Natural killer cell (primary cell): ENCODE measurements at regions of chr10 and their contacts with region 1.

Region 1: DNA sequence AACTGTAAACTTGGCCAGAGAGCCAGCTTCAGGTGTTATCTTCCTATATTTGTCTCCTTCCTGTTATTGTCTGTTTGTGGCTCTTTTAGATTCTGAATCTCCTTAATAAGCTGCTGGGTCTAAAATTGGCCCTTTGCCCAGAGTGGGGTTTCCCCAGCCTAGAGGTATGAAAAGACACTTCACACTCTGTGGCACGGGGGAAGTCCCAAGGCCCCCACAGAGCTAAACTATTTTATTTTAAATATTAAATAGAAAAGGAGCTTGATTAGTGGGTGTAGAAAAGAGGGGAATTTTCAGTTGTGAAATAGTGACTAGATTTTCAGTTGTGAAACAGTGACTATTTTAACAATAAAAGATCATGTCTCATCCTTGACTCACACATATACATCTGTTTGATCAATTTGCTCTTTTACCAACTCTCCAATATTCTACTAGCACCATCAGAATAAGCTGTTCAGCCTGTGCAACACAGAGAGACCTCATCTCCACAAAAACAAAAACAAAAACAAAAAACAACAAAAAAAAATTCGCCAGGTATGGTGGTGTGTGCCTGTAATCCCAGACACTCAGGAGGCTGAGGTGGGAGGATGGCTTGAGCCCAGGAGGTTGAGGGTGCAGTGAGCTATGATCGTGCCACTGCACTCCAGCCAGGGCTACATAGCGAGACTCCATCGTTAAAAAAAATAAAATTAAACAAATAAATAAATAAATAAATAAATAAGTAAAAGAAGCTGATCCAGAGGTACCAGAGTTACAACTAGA is 24.9 kb upstream of the ADO start:
- DNase-seq: peak; percentile 76 to 97
- ATAC-seq: peak; percentile 92 to 98 (median 97)
- H3K4me3 ChIP-seq: no peak overlapping the region
- H3K4me3 Mint-ChIP-seq: peak overlapping the region; percentile 45
- H3K27ac ChIP-seq: no peak overlapping the region
- H3K27ac Mint-ChIP-seq: peak overlapping the region; percentile 43 to 57
- H3K4me1 ChIP-seq: peaks cover 14% of the 10 kb centered on the region
- H3K4me1 Mint-ChIP-seq: peaks cover 22% of the 10 kb centered on the region in 2 donors
- H3K27me3 ChIP-seq: no peaks in the 10 kb centered on the region
- H3K27me3 Mint-ChIP-seq: no peaks in the 10 kb centered on the region
- CTCF ChIP-seq: no peak

Region 2: DNA sequence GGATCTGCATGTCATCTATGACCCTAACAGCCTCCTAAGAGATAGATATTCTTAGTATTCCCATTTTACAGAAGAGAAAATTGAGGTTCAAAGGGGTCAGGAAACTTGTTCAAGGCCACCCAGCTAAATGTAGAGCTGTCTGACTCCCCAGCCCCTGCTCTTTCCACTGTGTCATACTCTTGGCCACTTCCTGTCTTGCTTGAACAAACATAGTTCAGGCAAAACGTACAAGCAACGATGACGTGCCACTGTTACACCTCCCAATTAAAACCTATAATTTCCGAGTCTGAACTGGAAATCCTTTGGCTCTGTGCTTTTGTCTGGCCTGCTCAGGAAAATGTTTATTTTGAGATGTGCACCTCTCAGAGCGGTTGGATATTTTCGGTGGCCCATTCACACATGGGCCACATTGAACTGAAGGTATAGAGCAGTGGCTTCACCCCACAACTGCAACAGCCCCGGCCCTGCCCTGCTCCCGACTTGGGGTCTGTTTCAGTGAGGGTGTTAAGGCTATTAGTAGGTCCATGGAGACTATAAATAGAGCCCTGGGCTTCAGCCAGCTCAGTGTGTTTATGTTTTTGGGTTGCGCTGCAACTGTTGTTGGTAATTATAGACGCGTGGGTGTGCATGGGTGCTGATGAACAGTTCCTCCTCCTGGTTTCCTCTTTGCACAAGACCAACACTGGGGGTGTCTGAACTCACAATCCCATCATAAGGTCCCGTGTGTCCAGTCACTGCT is 147.4 kb before region 1 on chr10:
- intact Hi-C with region 1: loop called (anchors 1 kb)
- DNase-seq: peak; percentile 65 to 80
- ATAC-seq: peak; percentile 77 to 91 (median 83)
- H3K4me3 ChIP-seq: no peak overlapping the region
- H3K4me3 Mint-ChIP-seq: peak overlapping the region; percentile 63
- H3K27ac ChIP-seq: peak overlapping the region; percentile 85
- H3K27ac Mint-ChIP-seq: peak overlapping the region in 1 of 2 donors; percentile 99
- H3K4me1 ChIP-seq: peaks cover 44% of the 10 kb centered on the region
- H3K4me1 Mint-ChIP-seq: peaks cover 19 to 23% of the 10 kb centered on the region in 2 donors
- H3K27me3 ChIP-seq: no peaks in the 10 kb centered on the region
- H3K27me3 Mint-ChIP-seq: no peaks in the 10 kb centered on the region
- CTCF ChIP-seq: no peak

Region 3: GRCh38 chr10:62732841-62733653 is 46.6 kb before region 1 on chr10:
- intact Hi-C with region 1: loop called (anchors 2 kb)
- DNase-seq: peak; percentile 33 to 88
- ATAC-seq: peak; percentile 73 to 80 (median 79)
- H3K4me3 ChIP-seq: no peak overlapping the region
- H3K4me3 Mint-ChIP-seq: peak overlapping the region; percentile 28
- H3K27ac ChIP-seq: peak overlapping the region; percentile 50
- H3K27ac Mint-ChIP-seq: peak overlapping the region in 1 of 2 donors; percentile 78
- H3K4me1 ChIP-seq: peaks cover 33% of the 10 kb centered on the region
- H3K4me1 Mint-ChIP-seq: peaks cover 14% of the 10 kb centered on the region in 2 donors
- H3K27me3 ChIP-seq: no peaks in the 10 kb centered on the region
- H3K27me3 Mint-ChIP-seq: no peaks in the 10 kb centered on the region
- CTCF ChIP-seq: no peak

Region 4: DNA sequence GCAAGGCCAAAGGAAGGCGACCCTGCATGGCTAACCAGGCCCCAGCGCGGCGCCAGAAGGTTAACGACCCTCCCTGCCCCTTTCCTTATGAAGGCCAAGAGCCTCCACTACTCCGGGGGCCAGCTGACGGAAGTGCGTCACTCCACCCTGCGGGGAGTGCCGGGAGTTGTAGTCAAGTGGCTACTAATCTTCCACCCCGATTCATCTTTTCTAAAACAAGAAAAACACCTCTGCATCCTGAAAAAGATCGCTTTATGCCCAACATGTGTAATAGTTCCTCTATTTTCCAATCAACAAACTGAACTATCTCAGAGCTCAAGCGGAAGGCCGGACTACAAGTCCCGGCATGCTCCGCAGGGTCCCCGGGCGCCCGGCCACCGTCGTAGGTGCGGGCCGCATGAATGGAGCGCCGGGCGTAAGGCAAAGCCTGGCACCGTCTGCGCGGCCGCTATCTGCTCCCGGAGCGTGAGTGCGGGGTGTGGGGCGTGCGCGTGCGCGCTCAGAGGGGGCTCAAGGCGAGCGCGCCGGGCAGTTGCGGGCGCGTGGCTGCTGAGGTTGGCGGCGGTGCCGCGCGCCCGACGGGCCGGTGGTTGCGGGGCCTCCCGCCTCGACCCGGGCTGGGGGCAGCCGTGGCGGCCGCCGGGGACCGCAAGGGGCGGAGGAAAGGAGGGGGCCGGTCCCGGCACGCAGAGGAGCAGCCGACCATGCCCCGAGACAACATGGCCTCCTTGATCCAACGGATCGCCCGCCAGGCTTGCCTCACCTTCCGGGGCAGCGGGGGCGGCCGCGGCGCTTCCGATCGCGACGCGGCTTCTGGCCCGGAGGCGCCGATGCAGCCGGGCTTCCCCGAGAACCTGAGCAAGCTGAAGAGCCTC is 24.9 kb after region 1 on chr10 and contains the start of gene ADO:
- intact Hi-C with region 1: loop called (anchors 1 kb)
- DNase-seq: peak; percentile 76 to 89
- ATAC-seq: peak; percentile 85 to 93 (median 87)
- H3K4me3 ChIP-seq: peak within 1 kb of the TSS; percentile 69
- H3K4me3 Mint-ChIP-seq: peak within 1 kb of the TSS; percentile 94
- H3K27ac ChIP-seq: peak within 1 kb of the TSS; percentile 90
- H3K27ac Mint-ChIP-seq: peak within 1 kb of the TSS; percentile 97 to 99
- H3K4me1 ChIP-seq: peaks cover 16% of the 10 kb centered on the region
- H3K4me1 Mint-ChIP-seq: peaks cover 37 to 39% of the 10 kb centered on the region in 2 donors
- H3K27me3 ChIP-seq: no peaks in the 10 kb centered on the region
- H3K27me3 Mint-ChIP-seq: peaks cover 2 to 9% of the 10 kb centered on the region in 2 donors
- CTCF ChIP-seq: no peak
- total RNA-seq, gene ADO: 13.6 to 17.1 (median 15.6) TPM

Region 5: GRCh38 chr10:62851442-62851841 is 71.8 kb after region 1 on chr10:
- intact Hi-C with region 1: loop called (anchors 1 kb)
- DNase-seq: peak in 1 of 2 donors; percentile 41
- ATAC-seq: no peak
- H3K4me3 ChIP-seq: no peak overlapping the region
- H3K4me3 Mint-ChIP-seq: no peak overlapping the region
- H3K27ac ChIP-seq: no peak overlapping the region
- H3K27ac Mint-ChIP-seq: peak overlapping the region in 1 of 2 donors; percentile 35
- H3K4me1 ChIP-seq: peaks cover 32% of the 10 kb centered on the region
- H3K4me1 Mint-ChIP-seq: peaks cover 55 to 56% of the 10 kb centered on the region in 2 donors
- H3K27me3 ChIP-seq: no peaks in the 10 kb centered on the region
- H3K27me3 Mint-ChIP-seq: no peaks in the 10 kb centered on the region
- CTCF ChIP-seq: peak; percentile 37